Heart left ventricle (tissue), 16 donors: ENCODE measurements at regions of chr17 and their contacts with region 1.

Region 1: GRCh38 chr17:4498461-4499397 is at the start of gene SPNS2:
- DNase-seq: peak; percentile 70 to 84 (median 76)
- ATAC-seq: peak; percentile 68 to 94 (median 88)
- H3K4me3 ChIP-seq: peak within 1 kb of the TSS; percentile 18 to 75 (median 62)
- H3K27ac ChIP-seq: peak within 1 kb of the TSS; percentile 26 to 82 (median 72)
- H3K4me1 ChIP-seq: peaks cover 0 to 54% (median 29%) of the 10 kb centered on the region in 12 donors
- H3K27me3 ChIP-seq: peaks cover 0 to 33% (median 0%) of the 10 kb centered on the region in 9 donors
- CTCF ChIP-seq: peak in 1 of 12 donors; percentile 4
- POLR2A ChIP-seq: peak in 1 of 2 donors; percentile 48
- total RNA-seq, gene SPNS2: 6.4 to 20.4 (median 11.4) TPM

Region 2: DNA sequence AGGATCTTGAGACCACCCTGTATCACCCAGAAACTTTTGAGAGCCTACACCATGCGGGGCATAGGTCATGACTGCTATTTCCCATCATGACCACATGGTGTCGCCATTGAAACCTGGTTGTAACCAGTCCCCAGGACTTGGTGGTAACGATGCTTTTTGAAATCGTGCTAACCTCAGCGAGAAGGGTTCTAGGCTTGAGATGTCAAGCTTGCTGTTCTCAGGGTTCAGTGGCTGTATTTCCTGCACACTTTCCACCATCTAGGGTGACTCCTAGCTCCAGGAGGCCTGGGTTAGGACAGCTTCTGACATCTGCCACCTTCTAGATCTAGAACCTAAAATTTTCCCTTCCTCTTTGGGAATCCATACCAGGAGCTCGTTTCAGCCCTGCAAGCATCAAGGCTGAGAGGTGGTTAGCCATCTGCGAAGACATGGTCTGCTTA is 78.0 kb before region 1 on chr17:
- intact Hi-C with region 1: loop called in 4 of 10 experiments (anchors 5 to 10 kb)
- DNase-seq: peak in 3 of 5 donors; percentile 43 to 62 (median 54)
- ATAC-seq: peak in 3 of 4 donors; percentile 88 to 92 (median 90)
- H3K4me3 ChIP-seq: no peak overlapping the region
- H3K27ac ChIP-seq: no peak overlapping the region
- H3K4me1 ChIP-seq: peaks cover 0 to 4% (median 0%) of the 10 kb centered on the region in 12 donors
- H3K27me3 ChIP-seq: no peaks in the 10 kb centered on the region
- CTCF ChIP-seq: peak; percentile 77 to 92 (median 83)
- POLR2A ChIP-seq: no peak

Region 3: GRCh38 chr17:4433515-4434031 is 65.2 kb before region 1 on chr17 and contains the start of gene SPNS3:
- intact Hi-C with region 1: loop called in 4 of 10 experiments (anchors 10 kb)
- DNase-seq: peak in 1 of 5 donors; percentile 54
- ATAC-seq: peak in 3 of 4 donors; percentile 7 to 39 (median 20)
- H3K4me3 ChIP-seq: peak within 1 kb of the TSS in 1 of 12 donors; percentile 29
- H3K27ac ChIP-seq: no peak within 1 kb of the TSS
- H3K4me1 ChIP-seq: peaks cover 0 to 28% (median 0%) of the 10 kb centered on the region in 12 donors
- H3K27me3 ChIP-seq: no peaks in the 10 kb centered on the region
- CTCF ChIP-seq: no peak
- POLR2A ChIP-seq: no peak
- total RNA-seq, gene SPNS3: 0.23 to 1.9 (median 1.1) TPM in 6 of 9 donors, not detected in the others

Region 4: DNA sequence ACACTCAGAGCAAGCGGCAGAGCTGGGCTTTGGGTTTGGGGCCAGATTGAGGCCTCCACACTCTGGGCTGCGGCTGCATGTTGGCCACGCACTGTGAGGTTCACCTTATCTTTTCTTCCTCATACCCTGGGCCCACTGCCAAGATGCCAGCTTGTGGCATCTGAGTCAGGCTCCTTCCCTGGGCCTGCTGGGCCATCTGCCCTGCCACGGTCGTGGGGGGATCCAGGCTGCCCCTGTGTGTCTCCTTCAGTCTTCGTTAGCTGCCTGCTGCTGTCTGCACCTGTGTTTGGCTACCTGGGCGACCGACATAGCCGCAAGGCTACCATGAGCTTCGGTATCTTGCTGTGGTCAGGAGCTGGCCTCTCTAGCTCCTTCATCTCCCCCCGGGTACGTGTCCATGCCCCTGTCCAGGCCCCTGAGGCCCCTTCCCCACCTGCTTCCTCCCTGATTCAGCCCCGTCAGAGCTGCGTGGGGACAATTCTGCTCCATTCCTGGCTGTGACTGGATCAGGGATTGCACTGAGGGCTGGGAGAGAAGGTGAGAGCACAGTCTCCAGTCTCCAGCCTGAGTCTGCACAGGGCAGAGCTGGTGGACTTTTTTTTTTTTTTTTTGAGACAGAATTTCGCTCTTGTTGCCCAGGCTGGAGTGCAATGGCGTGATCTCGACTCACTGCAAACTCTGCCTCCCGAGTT is 53.8 kb before region 1 on chr17:
- intact Hi-C with region 1: loop called in 1 of 10 experiments (anchors 10 kb)
- DNase-seq: peak; percentile 77 to 89 (median 83)
- ATAC-seq: peak; percentile 86 to 93 (median 90)
- H3K4me3 ChIP-seq: no peak overlapping the region
- H3K27ac ChIP-seq: peak overlapping the region in 9 of 12 donors; percentile 40 to 79 (median 61)
- H3K4me1 ChIP-seq: peaks cover 0 to 36% (median 21%) of the 10 kb centered on the region in 12 donors
- H3K27me3 ChIP-seq: no peaks in the 10 kb centered on the region
- CTCF ChIP-seq: no peak
- POLR2A ChIP-seq: no peak

Region 5: DNA sequence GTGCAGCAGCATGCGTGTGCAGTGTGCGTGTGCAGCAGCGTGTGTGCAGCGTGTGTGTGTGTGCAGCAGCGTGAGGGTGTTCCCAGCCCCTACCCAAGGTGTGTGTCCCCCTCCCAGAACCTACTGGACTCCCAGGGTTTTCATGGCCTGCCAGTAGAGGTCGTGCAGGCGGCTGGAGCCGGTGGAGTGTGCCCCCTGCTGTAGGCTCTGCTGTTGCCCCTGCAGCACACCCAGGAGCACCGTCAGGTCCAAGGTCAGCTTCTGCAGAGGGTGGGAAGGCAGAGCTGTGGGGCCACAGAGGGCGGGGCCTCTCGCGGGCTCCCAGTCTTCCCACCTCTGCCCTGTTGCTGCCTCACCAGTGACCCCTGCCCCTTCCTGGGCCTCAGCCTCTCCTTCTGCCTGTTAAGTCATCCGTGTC is 41.5 kb after region 1 on chr17:
- intact Hi-C with region 1: loop called in 3 of 10 experiments (anchors 5 kb)
- DNase-seq: peak in 1 of 5 donors; percentile 23
- ATAC-seq: peak in 2 of 4 donors; percentile 1 to 6
- H3K4me3 ChIP-seq: no peak overlapping the region
- H3K27ac ChIP-seq: peak overlapping the region; percentile 24 to 80 (median 53)
- H3K4me1 ChIP-seq: peaks cover 18 to 68% (median 45%) of the 10 kb centered on the region in 12 donors
- H3K27me3 ChIP-seq: no peaks in the 10 kb centered on the region
- CTCF ChIP-seq: peak in 5 of 12 donors; percentile 9 to 31 (median 21)
- POLR2A ChIP-seq: no peak